ENCODE measurements at regions of chr1 and their contacts with region 1.

Region 1: GRCh38 chr1:243312952-243313634 is 57.3 kb downstream of the SDCCAG8 start:
- DNase-seq: no peak
- H3K4me3 ChIP-seq: no peak overlapping the region
- H3K27ac ChIP-seq: no peak overlapping the region
- H3K4me1 ChIP-seq: peaks cover 13% of the 10 kb centered on the region
- H3K27me3 ChIP-seq: no peaks in the 10 kb centered on the region

Region 2: DNA sequence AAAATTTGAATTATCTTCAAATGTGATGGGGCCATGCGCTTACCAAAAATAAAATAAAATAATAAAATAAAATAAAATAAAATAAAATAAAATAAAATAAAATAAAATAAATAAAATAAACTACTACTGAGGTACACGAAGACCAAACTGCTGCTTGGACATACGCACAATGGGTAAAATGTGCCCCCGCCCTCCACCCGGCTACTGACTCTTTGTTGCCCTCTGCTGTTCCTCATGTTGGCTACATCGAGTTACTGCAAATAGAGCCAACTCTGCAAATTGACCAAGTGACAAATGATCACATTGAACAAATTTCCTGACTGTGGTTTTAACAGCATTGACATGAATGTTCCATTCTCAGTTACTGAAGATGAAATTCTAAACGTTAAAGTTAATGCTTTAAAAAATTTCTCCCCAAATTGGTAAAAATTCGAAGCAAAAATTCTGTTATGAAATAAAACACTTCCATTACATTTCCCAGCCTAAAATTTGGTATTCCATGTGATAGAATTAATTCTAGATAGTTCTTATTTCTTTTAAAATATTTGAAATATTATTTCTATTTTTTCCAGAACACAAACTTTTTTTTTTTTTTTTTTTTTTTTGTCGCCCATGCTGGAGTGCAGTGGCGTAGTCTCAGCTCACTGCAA is 1295.4 kb before region 1 on chr1:
- in situ Hi-C with region 1: loop called (anchors 25 kb)
- DNase-seq: peak; percentile 72
- H3K4me3 ChIP-seq: no peak overlapping the region
- H3K27ac ChIP-seq: no peak overlapping the region
- H3K4me1 ChIP-seq: no peaks in the 10 kb centered on the region
- H3K27me3 ChIP-seq: no peaks in the 10 kb centered on the region

Region 3: DNA sequence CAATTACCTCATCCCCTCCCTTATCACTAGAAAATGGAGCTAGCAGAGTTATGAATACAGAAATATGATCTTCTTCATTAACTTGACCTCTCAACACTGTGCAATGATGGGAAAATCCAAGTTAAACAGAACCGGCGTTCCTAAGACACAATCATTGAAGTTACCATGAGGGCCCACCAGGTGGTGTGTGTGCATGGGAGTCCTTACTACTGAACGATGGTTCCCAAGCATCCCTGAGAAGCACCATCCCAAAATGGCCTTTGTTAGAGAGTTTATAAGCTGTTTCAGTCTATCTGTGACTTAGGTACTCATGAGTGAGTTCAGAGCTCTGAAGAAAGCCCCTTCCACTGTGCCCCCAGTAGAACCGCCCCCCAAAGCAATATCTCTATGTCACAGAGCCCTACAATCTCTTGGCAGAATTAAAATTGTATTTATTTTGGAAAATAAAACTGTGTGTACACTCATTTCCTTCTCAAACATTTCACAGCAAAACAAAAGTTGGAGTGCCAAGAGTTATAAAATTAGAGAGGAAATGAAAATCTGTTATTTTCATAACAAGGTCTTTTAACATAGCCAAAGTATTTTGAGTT is 845.4 kb before region 1 on chr1:
- in situ Hi-C with region 1: loop called (anchors 10 kb)
- DNase-seq: peak; percentile 72
- H3K4me3 ChIP-seq: no peak overlapping the region
- H3K27ac ChIP-seq: no peak overlapping the region
- H3K4me1 ChIP-seq: no peaks in the 10 kb centered on the region
- H3K27me3 ChIP-seq: no peaks in the 10 kb centered on the region